ENCODE measurements at regions of chr18 and their contacts with region 1.

Region 1: DNA sequence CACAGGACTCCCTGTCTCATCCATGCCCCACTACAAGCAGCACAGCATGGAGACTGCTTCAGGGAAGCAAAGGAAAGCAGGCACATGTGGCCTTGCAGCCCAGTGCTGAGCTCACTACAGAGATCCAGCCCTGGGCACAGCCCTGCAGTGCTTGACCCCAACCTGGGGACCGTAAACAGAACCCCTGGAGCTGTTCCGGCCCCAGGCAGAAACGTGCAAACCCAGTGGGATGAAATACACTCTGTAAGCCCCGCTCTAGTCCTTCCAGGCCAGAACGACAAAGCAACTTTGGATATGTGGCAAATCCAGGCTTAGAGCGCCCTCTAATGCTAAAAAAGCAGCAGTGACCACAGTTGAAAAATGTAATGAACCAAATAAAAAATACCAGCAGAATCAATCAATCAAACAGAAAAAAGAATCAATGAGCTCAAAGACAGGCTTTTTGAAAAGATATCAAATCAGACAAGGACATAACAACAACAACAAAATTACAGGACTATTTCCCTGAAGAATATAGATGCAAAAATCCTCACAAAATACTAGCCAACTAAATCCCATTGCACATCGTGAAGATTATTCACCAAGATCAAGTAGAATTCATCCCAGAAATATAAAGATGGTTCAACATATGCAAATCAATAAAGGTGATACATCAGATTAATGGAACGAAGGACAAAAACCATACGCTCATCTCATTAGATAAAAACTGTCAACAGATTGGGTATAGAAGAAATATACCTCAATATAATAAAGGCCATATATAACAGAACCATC is 45.6 kb downstream of the ZNF519 start:
- DNase-seq: no peak
- ATAC-seq: peak; percentile 85
- H3K4me3 ChIP-seq: no peak overlapping the region
- H3K27ac ChIP-seq: no peak overlapping the region
- H3K4me1 ChIP-seq: peaks cover 0 to 5% of the 10 kb centered on the region in 2 experiments; a peak in 1 of 4 replicates
- H3K27me3 ChIP-seq: no peaks in the 10 kb centered on the region
- CTCF ChIP-seq: peak; percentile 75 to 92 (median 76)
- POLR2A ChIP-seq: no peak
- RAD21 ChIP-seq: peak; percentile 83

Region 2: DNA sequence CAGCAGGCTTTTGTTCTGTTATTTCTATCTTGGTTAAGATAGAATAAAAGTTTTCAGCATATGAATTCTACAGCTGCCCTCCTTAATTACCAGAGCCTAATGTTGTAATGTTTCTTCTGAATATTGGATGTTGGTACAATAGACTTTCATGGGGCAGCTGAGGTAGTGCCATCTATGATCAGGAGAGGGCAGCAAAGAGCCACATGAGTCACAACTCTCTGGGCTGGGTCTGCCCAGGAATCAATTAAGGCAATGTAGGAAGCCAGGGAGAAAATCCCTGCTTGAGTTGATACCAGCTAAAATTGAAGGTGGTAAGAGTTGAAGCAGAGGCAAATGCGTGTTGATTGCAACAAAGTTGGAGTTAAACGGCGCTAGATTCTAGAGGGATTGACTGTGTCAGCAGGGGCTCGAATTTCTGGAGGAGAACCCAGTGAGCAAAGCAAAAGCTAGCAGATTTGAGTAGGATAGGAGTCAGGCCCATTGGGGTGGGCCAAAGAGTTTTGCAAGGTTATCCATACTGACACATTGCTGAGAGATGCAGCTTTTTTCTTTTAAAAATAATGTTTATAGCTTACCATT is 273.3 kb before region 1 on chr18:
- CTCF ChIA-PET with region 1: interaction called, 54 read pairs
- POLR2A ChIA-PET with region 1: no interaction called
- RAD21 ChIA-PET with region 1: interaction called, 5 read pairs
- intact Hi-C with region 1: loop called (anchors 1 kb)
- DNase-seq: peak; percentile 50
- ATAC-seq: peak; percentile 90
- H3K4me3 ChIP-seq: no peak overlapping the region
- H3K27ac ChIP-seq: no peak overlapping the region
- H3K4me1 ChIP-seq: peaks cover 9 to 15% of the 10 kb centered on the region in 2 experiments
- H3K27me3 ChIP-seq: no peaks in the 10 kb centered on the region
- CTCF ChIP-seq: peak; percentile 50 to 91 (median 89); a peak in 5 of 6 replicates
- POLR2A ChIP-seq: no peak
- RAD21 ChIP-seq: peak; percentile 58

Region 3: DNA sequence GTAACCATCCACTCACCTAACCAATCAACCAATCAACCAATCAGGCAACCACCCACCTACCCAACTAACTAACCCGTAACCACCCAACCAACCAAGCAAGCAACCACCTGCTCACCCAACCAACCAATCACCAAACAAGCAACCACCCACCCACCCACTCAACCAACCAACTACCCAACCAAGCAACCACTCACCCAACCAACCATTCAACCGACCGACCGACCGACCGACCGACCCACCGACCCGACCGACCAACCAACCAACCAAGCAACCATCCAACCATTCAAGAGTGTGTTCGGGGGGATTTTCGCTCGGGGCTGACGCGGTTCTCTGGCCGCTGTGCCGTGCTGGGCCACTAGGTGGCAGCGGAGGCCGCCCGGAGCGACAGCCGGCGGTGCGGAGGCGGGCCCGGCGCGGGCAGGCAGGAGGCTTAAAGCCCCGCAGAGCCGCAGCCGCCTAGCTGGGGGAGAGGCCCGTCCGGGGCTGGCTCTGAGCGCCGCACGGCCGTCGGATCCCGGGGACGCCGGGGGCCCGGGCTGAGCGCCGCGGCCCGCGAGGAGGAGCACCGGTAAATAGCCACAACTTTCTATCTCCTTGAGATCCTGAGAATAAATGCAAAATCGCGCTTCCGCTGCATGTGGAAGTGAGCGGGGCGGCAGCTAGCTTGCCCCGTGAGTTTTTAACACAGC is 262.8 kb before region 1 on chr18 and contains the start of gene MC5R:
- CTCF ChIA-PET with region 1: interaction called, 25 read pairs
- POLR2A ChIA-PET with region 1: no interaction called
- RAD21 ChIA-PET with region 1: interaction called in 1 of 2 experiments, 3 read pairs
- intact Hi-C with region 1: loop called (anchors 1 kb)
- DNase-seq: no peak
- ATAC-seq: peak; percentile 98
- H3K4me3 ChIP-seq: peak within 1 kb of the TSS; percentile 7 to 34; a peak in 3 of 4 replicates
- H3K27ac ChIP-seq: no peak within 1 kb of the TSS
- H3K4me1 ChIP-seq: peaks cover 0 to 7% of the 10 kb centered on the region in 2 experiments; a peak in 1 of 4 replicates
- H3K27me3 ChIP-seq: peaks cover 21% of the 10 kb centered on the region; the same call in 1 of the 2 replicates
- CTCF ChIP-seq: peak; percentile 58 to 91 (median 80); a peak in 5 of 6 replicates
- POLR2A ChIP-seq: no peak
- RAD21 ChIP-seq: peak; percentile 78
- total RNA-seq, gene MC5R: not detected

Region 4: DNA sequence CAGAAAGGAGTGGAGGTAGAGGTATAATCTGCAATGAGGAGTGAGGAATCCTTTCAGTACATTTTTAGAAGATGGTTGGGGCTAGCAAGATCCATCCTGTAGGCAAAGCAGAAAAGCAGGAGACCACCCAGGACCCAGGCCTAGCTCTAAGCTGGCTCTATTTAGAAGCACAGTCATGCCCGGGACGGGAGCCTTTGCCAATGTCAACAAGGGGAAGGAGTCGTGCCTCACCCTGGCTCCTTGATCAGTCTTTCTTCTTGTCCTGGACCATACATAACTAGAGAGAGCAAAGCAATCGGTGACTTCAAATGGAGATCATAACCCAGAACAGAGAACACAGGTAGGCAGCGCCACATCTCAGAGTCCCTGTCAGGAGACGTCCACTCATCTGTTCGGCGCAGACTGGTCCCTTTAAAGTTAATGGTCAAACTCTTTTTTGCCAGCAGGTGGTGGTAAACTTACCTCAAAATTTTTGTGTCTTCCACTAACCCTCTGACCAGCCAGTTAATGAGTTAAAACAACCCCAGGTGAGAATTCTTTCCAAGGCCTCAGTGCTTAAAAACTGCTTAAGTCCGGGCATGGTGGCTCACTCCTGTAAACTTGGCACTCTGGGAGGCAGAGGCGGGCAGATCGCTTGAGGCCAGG is 254.7 kb before region 1 on chr18:
- CTCF ChIA-PET with region 1: interaction called, 16 read pairs
- POLR2A ChIA-PET with region 1: no interaction called
- RAD21 ChIA-PET with region 1: interaction called in 1 of 2 experiments, 3 read pairs
- intact Hi-C with region 1: loop called (anchors 2 kb)
- DNase-seq: peak; percentile 13
- ATAC-seq: peak; percentile 79
- H3K4me3 ChIP-seq: no peak overlapping the region
- H3K27ac ChIP-seq: no peak overlapping the region
- H3K4me1 ChIP-seq: no peaks in the 10 kb centered on the region
- H3K27me3 ChIP-seq: peaks cover 8% of the 10 kb centered on the region; the same call in 1 of the 2 replicates
- CTCF ChIP-seq: peak; percentile 23 to 49 (median 28); a peak in 4 of 6 replicates
- POLR2A ChIP-seq: no peak
- RAD21 ChIP-seq: peak; percentile 39; the same call in 1 of the 2 replicates